CD8-positive, alpha-beta T cell (primary cell): ENCODE measurements at regions of chr1 and their contacts with region 1.

Region 1: GRCh38 chr1:58664881-58665280 is 35.0 kb downstream of the MYSM1 start:
- DNase-seq: no peak
- ATAC-seq: no peak
- H3K4me3 ChIP-seq: no peak overlapping the region
- H3K4me3 Mint-ChIP-seq: no peak overlapping the region
- H3K27ac ChIP-seq: no peak overlapping the region
- H3K27ac Mint-ChIP-seq: no peak overlapping the region
- H3K4me1 ChIP-seq: no peaks in the 10 kb centered on the region
- H3K4me1 Mint-ChIP-seq: peaks cover 1% of the 10 kb centered on the region
- H3K27me3 ChIP-seq: no peaks in the 10 kb centered on the region
- H3K27me3 Mint-ChIP-seq: no peaks in the 10 kb centered on the region
- CTCF ChIP-seq: no peak

Region 2: GRCh38 chr1:58652651-58653184 is 12.2 kb before region 1 on chr1:
- CTCF ChIA-PET with region 1: interaction called, 27 read pairs
- POLR2A ChIA-PET with region 1: no interaction called
- intact Hi-C with region 1: no loop called
- DNase-seq: peak; percentile 11 to 83 (median 53)
- ATAC-seq: peak; percentile 90
- H3K4me3 ChIP-seq: no peak overlapping the region
- H3K4me3 Mint-ChIP-seq: no peak overlapping the region
- H3K27ac ChIP-seq: no peak overlapping the region
- H3K27ac Mint-ChIP-seq: no peak overlapping the region
- H3K4me1 ChIP-seq: peaks cover 14% of the 10 kb centered on the region
- H3K4me1 Mint-ChIP-seq: peaks cover 23% of the 10 kb centered on the region
- H3K27me3 ChIP-seq: no peaks in the 10 kb centered on the region
- H3K27me3 Mint-ChIP-seq: no peaks in the 10 kb centered on the region
- CTCF ChIP-seq: peak; percentile 84

Region 3: GRCh38 chr1:58688931-58689566 is 24.2 kb after region 1 on chr1:
- CTCF ChIA-PET with region 1: no interaction called
- POLR2A ChIA-PET with region 1: no interaction called
- intact Hi-C with region 1: no loop called
- DNase-seq: no peak
- ATAC-seq: no peak
- H3K4me3 ChIP-seq: no peak overlapping the region
- H3K4me3 Mint-ChIP-seq: no peak overlapping the region
- H3K27ac ChIP-seq: no peak overlapping the region
- H3K27ac Mint-ChIP-seq: no peak overlapping the region
- H3K4me1 ChIP-seq: no peaks in the 10 kb centered on the region
- H3K4me1 Mint-ChIP-seq: peaks cover 13% of the 10 kb centered on the region
- H3K27me3 ChIP-seq: no peaks in the 10 kb centered on the region
- H3K27me3 Mint-ChIP-seq: no peaks in the 10 kb centered on the region
- CTCF ChIP-seq: no peak